ENCODE measurements at regions of chr12 and their contacts with region 1.

Region 1: DNA sequence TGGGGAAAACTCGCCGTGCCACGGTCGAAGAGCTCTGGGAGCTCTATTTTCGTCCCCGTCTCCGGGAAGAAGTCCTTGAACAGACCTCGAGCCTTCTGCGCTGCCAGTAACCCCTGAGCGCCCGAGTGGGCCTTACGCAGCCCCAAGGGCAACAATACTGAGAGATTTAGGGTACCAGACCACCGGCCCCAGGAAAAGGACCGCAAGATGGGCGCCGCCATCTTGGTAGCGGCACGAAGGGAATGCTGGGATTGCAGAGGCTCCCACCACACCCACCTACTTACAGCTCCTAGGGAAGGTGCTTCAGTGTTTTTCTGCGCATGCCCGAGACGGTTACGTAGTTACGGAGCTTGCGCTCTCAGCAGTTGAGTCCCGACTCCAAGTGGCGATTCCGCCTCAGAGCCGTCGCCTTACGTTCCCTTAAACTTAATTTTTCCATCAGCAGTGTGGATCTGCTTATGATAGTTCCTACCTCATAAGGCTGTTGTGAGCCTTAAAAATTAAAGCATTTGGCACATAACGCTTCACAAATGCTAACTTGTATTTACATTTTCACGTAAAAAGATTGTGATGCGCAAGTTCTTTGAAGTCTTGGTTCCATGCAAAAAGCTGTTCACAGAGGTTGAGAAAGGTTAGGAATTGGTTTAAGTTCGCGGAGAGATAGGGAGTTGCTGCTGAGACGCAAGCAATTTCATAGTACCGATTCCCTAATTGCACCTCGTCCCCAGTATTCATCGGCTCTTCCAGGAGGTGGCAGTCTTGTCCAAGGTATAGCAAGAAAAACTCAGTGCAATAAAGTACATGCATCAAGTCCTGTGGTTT is at the start of gene YARS2:
- DNase-seq: peak; percentile 92
- ATAC-seq: peak; percentile 94
- H3K4me3 ChIP-seq: peak within 1 kb of the TSS; percentile 77
- H3K27ac ChIP-seq: peak within 1 kb of the TSS; percentile 89
- H3K4me1 ChIP-seq: no peaks in the 10 kb centered on the region
- H3K27me3 ChIP-seq: no peaks in the 10 kb centered on the region
- CTCF ChIP-seq: peak; percentile 73 to 91 (median 77)
- EP300 ChIP-seq: no peak
- POLR2A ChIP-seq: peak; percentile 88
- RAD21 ChIP-seq: peak; percentile 98
- polyA plus RNA-seq, gene YARS2: 13.4 to 20.0 TPM

Region 2: DNA sequence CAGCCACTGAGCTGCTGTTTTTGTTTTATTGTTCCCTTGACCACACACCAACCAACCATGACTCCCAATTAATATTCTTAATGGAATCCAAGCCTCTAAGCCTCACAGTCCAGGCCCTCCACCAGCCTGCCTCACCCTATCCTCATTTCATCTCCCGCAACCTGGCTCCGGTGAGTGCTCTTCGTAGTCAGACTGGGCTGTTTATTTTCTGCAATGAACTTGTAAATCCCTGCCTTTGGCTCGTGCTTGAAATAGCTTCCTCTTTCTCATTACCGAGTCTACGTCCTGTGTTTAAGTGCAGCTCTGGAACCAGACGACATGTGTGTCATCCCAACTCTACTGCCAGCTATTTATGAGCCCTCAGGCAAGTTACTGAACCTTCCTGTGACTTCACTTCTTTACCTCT is 1108.8 kb before region 1 on chr12:
- CTCF ChIA-PET with region 1: interaction called, 52 read pairs
- POLR2A ChIA-PET with region 1: no interaction called
- RAD21 ChIA-PET with region 1: interaction called, 60 read pairs
- SMC1A ChIA-PET with region 1: interaction called, 34 read pairs
- in situ Hi-C with region 1: loop called (anchors 5 kb)
- intact Hi-C with region 1: loop called (anchors 2 kb)
- DNase-seq: no peak
- ATAC-seq: no peak
- H3K4me3 ChIP-seq: no peak overlapping the region
- H3K27ac ChIP-seq: no peak overlapping the region
- H3K4me1 ChIP-seq: no peaks in the 10 kb centered on the region
- H3K27me3 ChIP-seq: no peaks in the 10 kb centered on the region
- CTCF ChIP-seq: no peak
- EP300 ChIP-seq: no peak
- POLR2A ChIP-seq: no peak
- RAD21 ChIP-seq: no peak

Region 3: GRCh38 chr12:32032205-32032810 is 723.6 kb before region 1 on chr12:
- CTCF ChIA-PET with region 1: no interaction called
- POLR2A ChIA-PET with region 1: no interaction called
- RAD21 ChIA-PET with region 1: no interaction called
- SMC1A ChIA-PET with region 1: no interaction called
- in situ Hi-C with region 1: no loop called
- intact Hi-C with region 1: no loop called
- DNase-seq: no peak
- ATAC-seq: no peak
- H3K4me3 ChIP-seq: no peak overlapping the region
- H3K27ac ChIP-seq: no peak overlapping the region
- H3K4me1 ChIP-seq: no peaks in the 10 kb centered on the region; the same call in 1 of the 2 replicates
- H3K27me3 ChIP-seq: no peaks in the 10 kb centered on the region
- CTCF ChIP-seq: no peak
- EP300 ChIP-seq: no peak
- POLR2A ChIP-seq: no peak
- RAD21 ChIP-seq: no peak

Region 4: DNA sequence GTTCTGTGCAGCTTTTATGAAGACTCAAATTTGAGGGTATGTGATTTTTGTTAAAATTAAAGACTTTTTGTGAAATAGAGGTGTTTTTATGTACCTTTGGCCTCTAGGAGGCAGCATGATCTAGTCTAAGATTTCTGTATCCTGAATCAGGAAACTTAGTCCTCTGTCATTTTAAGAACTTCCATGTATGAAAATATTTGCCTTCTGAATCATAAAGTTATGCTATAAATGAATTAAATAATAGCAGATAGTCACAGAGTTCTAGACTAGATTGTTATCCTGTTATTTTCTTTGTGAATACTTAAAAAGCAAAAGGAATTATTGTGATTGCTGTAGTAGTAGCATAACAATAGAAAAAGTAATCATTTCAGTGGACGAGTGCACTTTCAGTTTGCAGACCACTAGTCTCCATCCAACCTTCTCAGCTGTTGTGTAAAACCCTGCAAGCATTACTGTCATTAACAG is 300.2 kb before region 1 on chr12:
- CTCF ChIA-PET with region 1: interaction called, 99 read pairs
- POLR2A ChIA-PET with region 1: interaction called, 3 read pairs
- RAD21 ChIA-PET with region 1: interaction called, 73 read pairs
- SMC1A ChIA-PET with region 1: interaction called, 67 read pairs
- in situ Hi-C with region 1: loop called (anchors 5 kb)
- intact Hi-C with region 1: loop called (anchors 1 kb)
- DNase-seq: no peak
- ATAC-seq: peak; percentile 48; the same call in 2 of the 3 replicates
- H3K4me3 ChIP-seq: no peak overlapping the region
- H3K27ac ChIP-seq: no peak overlapping the region
- H3K4me1 ChIP-seq: no peaks in the 10 kb centered on the region; the same call in 1 of the 2 replicates
- H3K27me3 ChIP-seq: no peaks in the 10 kb centered on the region
- CTCF ChIP-seq: peak; percentile 46 to 70 (median 49); a peak in 5 of 6 replicates
- EP300 ChIP-seq: no peak
- POLR2A ChIP-seq: no peak
- RAD21 ChIP-seq: peak; percentile 82

Region 5: DNA sequence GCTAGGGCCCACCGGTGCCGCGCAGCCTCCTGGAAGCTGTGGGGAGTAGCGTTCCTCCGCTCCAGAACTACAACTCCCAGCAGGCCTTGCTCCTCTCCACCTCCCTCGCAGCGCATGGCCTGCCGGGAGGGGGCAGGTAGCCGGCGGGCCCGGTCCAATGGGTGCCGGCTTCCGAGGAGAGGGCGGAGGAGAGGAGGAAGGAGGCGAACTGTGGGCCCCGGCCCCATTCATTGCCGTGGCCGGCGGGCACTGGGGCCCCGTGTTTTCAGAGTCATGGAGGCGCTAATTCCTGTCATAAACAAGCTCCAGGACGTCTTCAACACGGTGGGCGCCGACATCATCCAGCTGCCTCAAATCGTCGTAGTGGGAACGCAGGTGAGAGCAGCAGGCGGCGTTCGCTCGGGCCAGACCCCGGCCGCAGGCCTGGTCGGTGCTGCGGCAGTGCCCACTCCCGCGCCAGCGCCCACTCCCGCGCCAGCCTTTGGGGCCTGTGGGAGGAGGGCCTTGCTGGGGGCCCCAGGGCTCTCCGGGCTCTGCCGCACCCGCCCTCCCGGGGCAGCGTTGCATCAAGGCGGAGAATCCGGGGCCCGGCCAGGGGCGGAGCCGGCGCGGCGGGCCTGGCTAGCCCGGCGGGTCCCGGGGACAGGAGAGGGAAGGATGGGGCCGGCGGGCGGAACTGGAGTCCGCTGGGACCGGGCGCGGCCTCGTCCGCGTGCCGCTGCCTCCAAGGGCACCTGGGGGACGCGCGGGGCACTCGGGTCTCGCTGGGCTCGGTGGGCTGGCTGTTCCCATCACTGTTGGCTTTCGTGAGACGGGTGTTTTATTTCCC is 76.6 kb before region 1 on chr12 and contains the start of gene DNM1L:
- CTCF ChIA-PET with region 1: interaction called, 25 read pairs
- POLR2A ChIA-PET with region 1: interaction called, 4 read pairs
- RAD21 ChIA-PET with region 1: interaction called, 14 read pairs
- SMC1A ChIA-PET with region 1: interaction called, 12 read pairs
- in situ Hi-C with region 1: no loop called
- intact Hi-C with region 1: no loop called
- DNase-seq: peak; percentile 79
- ATAC-seq: peak; percentile 97
- H3K4me3 ChIP-seq: peak within 1 kb of the TSS; percentile 100
- H3K27ac ChIP-seq: peak within 1 kb of the TSS; percentile 64
- H3K4me1 ChIP-seq: peaks cover 14% of the 10 kb centered on the region
- H3K27me3 ChIP-seq: no peaks in the 10 kb centered on the region
- CTCF ChIP-seq: no peak
- EP300 ChIP-seq: no peak
- POLR2A ChIP-seq: peak; percentile 94
- RAD21 ChIP-seq: no peak
- polyA plus RNA-seq, gene DNM1L: 23.1 to 29.3 TPM

Region 6: DNA sequence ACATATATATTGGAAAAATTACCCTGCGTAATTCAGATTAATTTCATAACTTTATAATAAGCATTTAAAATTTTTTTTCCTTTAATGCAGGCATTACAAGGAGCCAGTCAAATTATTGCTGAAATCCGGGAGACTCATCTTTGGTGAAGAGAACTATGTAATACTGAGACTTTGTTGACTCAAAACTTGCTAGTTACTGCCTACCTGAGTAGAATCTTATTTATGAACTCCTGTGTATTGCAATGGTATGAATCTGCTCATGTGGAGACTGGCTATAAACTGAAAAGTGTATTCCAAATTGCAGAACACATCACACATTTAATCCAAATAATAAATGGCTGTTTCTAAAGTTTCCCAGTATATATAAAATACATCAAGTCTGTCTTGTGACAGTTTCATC is 12.6 kb before region 1 on chr12:
- CTCF ChIA-PET with region 1: interaction called, 26 read pairs
- POLR2A ChIA-PET with region 1: interaction called, 6 read pairs
- RAD21 ChIA-PET with region 1: interaction called, 5 read pairs
- SMC1A ChIA-PET with region 1: interaction called, 4 read pairs
- in situ Hi-C with region 1: no loop called
- intact Hi-C with region 1: no loop called
- DNase-seq: no peak
- ATAC-seq: no peak
- H3K4me3 ChIP-seq: no peak overlapping the region
- H3K27ac ChIP-seq: no peak overlapping the region
- H3K4me1 ChIP-seq: no peaks in the 10 kb centered on the region
- H3K27me3 ChIP-seq: no peaks in the 10 kb centered on the region
- CTCF ChIP-seq: no peak
- EP300 ChIP-seq: no peak
- POLR2A ChIP-seq: no peak
- RAD21 ChIP-seq: no peak

Region 7: GRCh38 chr12:32780071-32780470 is 24.2 kb after region 1 on chr12:
- CTCF ChIA-PET with region 1: interaction called, 25 read pairs
- POLR2A ChIA-PET with region 1: no interaction called
- RAD21 ChIA-PET with region 1: interaction called, 7 read pairs
- SMC1A ChIA-PET with region 1: interaction called, 6 read pairs
- in situ Hi-C with region 1: no loop called
- intact Hi-C with region 1: no loop called
- DNase-seq: no peak
- ATAC-seq: no peak
- H3K4me3 ChIP-seq: no peak overlapping the region
- H3K27ac ChIP-seq: no peak overlapping the region
- H3K4me1 ChIP-seq: no peaks in the 10 kb centered on the region
- H3K27me3 ChIP-seq: no peaks in the 10 kb centered on the region
- CTCF ChIP-seq: no peak
- EP300 ChIP-seq: no peak
- POLR2A ChIP-seq: no peak
- RAD21 ChIP-seq: no peak

Region 8: GRCh38 chr12:32828552-32828951 is 72.7 kb after region 1 on chr12:
- CTCF ChIA-PET with region 1: no interaction called
- POLR2A ChIA-PET with region 1: no interaction called
- RAD21 ChIA-PET with region 1: no interaction called
- SMC1A ChIA-PET with region 1: no interaction called
- in situ Hi-C with region 1: no loop called
- intact Hi-C with region 1: no loop called
- DNase-seq: no peak
- ATAC-seq: no peak
- H3K4me3 ChIP-seq: no peak overlapping the region
- H3K27ac ChIP-seq: no peak overlapping the region
- H3K4me1 ChIP-seq: no peaks in the 10 kb centered on the region
- H3K27me3 ChIP-seq: no peaks in the 10 kb centered on the region
- CTCF ChIP-seq: no peak
- EP300 ChIP-seq: no peak
- POLR2A ChIP-seq: no peak
- RAD21 ChIP-seq: no peak

Region 9: GRCh38 chr12:34022079-34022830 is 1266.4 kb after region 1 on chr12 and contains the start of gene ALG10:
- CTCF ChIA-PET with region 1: interaction called, 110 read pairs
- POLR2A ChIA-PET with region 1: interaction called, 21 read pairs
- RAD21 ChIA-PET with region 1: interaction called, 82 read pairs
- SMC1A ChIA-PET with region 1: interaction called, 55 read pairs
- in situ Hi-C with region 1: loop called (anchors 5 kb)
- intact Hi-C with region 1: loop called (anchors 1 kb)
- DNase-seq: peak; percentile 83
- ATAC-seq: peak; percentile 100
- H3K4me3 ChIP-seq: peak within 1 kb of the TSS; percentile 88
- H3K27ac ChIP-seq: peak within 1 kb of the TSS; percentile 78
- H3K4me1 ChIP-seq: no peaks in the 10 kb centered on the region
- H3K27me3 ChIP-seq: no peaks in the 10 kb centered on the region
- CTCF ChIP-seq: peak; percentile 55 to 60 (median 59)
- EP300 ChIP-seq: no peak
- POLR2A ChIP-seq: peak; percentile 81
- RAD21 ChIP-seq: peak; percentile 74
- polyA plus RNA-seq, gene ALG10: 3.1 to 4.6 TPM

Measured in GM12878 (cell line).